MCF 10A (cell line): ENCODE measurements at regions of chr3 and their contacts with region 1.

Region 1: GRCh38 chr3:50227390-50228183 is 8.4 kb upstream of the GNAI2 start:
- DNase-seq: peak; percentile 95
- H3K4me3 Mint-ChIP-seq: peak overlapping the region; percentile 74
- H3K27ac Mint-ChIP-seq: peak overlapping the region; percentile 17
- H3K4me1 Mint-ChIP-seq: peaks cover 12% of the 10 kb centered on the region
- H3K27me3 Mint-ChIP-seq: peaks cover 16% of the 10 kb centered on the region
- CTCF ChIP-seq: peak; percentile 91

Region 2: DNA sequence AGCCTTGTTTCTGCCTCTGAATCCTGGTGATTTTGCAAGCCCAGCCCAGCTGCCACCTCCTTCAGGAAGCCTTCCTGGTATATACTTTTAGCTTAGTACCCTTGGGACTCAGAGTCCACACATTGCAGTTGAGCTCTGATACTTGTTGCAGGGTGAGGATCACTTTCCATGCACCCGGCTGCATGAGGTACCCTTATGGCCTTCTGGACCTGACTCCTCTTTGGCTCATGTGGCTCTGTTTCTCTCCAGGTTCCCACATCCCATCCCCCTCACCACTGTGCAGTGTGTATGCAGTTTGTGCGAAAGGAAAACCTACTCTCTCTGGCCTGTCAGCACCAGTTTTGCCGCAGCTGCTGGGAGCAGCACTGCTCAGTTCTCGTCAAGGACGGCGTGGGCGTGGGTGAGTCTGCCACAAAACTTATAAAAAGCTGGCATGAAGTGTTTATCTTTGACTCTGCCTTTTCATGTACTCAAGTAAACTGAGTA is 1260.7 kb before region 1 on chr3:
- CTCF ChIA-PET with region 1: no interaction called
- POLR2A ChIA-PET with region 1: no interaction called
- intact Hi-C with region 1: no loop called
- DNase-seq: no peak
- H3K4me3 Mint-ChIP-seq: no peak overlapping the region
- H3K27ac Mint-ChIP-seq: no peak overlapping the region
- H3K4me1 Mint-ChIP-seq: peaks cover 5% of the 10 kb centered on the region
- H3K27me3 Mint-ChIP-seq: no peaks in the 10 kb centered on the region
- CTCF ChIP-seq: no peak

Region 3: GRCh38 chr3:49966230-49966942 is 261.2 kb before region 1 on chr3:
- CTCF ChIA-PET with region 1: no interaction called
- POLR2A ChIA-PET with region 1: no interaction called
- intact Hi-C with region 1: no loop called
- DNase-seq: peak; percentile 33
- H3K4me3 Mint-ChIP-seq: no peak overlapping the region
- H3K27ac Mint-ChIP-seq: no peak overlapping the region
- H3K4me1 Mint-ChIP-seq: peaks cover 4% of the 10 kb centered on the region
- H3K27me3 Mint-ChIP-seq: no peaks in the 10 kb centered on the region
- CTCF ChIP-seq: no peak

Region 4: GRCh38 chr3:50121416-50122032 is 106.1 kb before region 1 on chr3:
- CTCF ChIA-PET with region 1: interaction called, 72 read pairs
- POLR2A ChIA-PET with region 1: interaction called, 37 read pairs
- intact Hi-C with region 1: loop called (anchors 1 kb)
- DNase-seq: peak; percentile 84
- H3K4me3 Mint-ChIP-seq: no peak overlapping the region
- H3K27ac Mint-ChIP-seq: no peak overlapping the region
- H3K4me1 Mint-ChIP-seq: peaks cover 13% of the 10 kb centered on the region
- H3K27me3 Mint-ChIP-seq: no peaks in the 10 kb centered on the region
- CTCF ChIP-seq: peak; percentile 80

Region 5: DNA sequence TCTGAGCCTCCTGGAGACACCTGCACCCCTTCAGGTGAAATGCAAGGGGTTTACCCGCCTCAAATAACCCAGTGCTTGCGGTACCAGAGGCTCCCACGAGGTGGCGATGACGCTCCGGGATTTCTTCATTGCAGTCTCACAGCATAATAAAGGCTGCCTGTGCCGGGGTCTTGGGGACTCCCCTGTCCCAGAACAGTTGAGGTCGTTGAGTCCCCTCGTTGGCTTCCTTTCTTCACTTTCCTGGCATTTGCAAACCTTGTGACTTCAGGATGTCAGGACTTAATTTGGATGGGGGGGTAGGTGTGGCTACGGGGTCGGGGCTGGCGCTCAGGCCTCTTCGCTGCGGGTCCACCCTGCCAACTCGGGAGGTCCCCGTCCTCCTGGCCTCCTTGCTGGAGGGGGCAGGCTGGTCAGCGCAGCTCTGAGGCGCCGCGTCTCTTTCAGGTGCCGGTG is 34.9 kb before region 1 on chr3:
- CTCF ChIA-PET with region 1: interaction called, 209 read pairs
- POLR2A ChIA-PET with region 1: interaction called, 6 read pairs
- intact Hi-C with region 1: loop called (anchors 1 kb)
- DNase-seq: peak; percentile 68
- H3K4me3 Mint-ChIP-seq: no peak overlapping the region
- H3K27ac Mint-ChIP-seq: no peak overlapping the region
- H3K4me1 Mint-ChIP-seq: no peaks in the 10 kb centered on the region
- H3K27me3 Mint-ChIP-seq: no peaks in the 10 kb centered on the region
- CTCF ChIP-seq: peak; percentile 85

Region 6: DNA sequence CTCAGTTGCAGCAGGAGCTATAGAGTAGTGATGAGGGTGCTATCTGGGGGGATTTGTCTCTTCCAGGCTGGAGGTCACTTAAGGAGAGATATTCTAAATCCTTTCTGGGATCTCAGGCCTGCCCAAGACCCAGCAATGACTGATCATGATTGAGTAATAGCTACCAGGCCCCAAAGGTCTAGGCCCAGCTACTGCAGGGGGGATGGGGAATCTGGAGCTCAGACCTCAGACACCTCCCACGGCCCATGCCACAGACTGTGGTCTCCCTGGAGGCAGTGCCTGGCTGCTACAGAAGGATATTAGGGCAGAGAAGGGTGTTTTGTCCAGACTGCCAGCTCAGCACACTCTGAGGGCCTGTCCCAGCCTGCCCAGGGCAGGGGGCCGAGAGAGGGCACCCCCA is 15.7 kb before region 1 on chr3:
- CTCF ChIA-PET with region 1: interaction called, 21 read pairs
- POLR2A ChIA-PET with region 1: interaction called, 3 read pairs
- intact Hi-C with region 1: no loop called
- DNase-seq: no peak
- H3K4me3 Mint-ChIP-seq: no peak overlapping the region
- H3K27ac Mint-ChIP-seq: no peak overlapping the region
- H3K4me1 Mint-ChIP-seq: no peaks in the 10 kb centered on the region
- H3K27me3 Mint-ChIP-seq: no peaks in the 10 kb centered on the region
- CTCF ChIP-seq: no peak

Region 7: DNA sequence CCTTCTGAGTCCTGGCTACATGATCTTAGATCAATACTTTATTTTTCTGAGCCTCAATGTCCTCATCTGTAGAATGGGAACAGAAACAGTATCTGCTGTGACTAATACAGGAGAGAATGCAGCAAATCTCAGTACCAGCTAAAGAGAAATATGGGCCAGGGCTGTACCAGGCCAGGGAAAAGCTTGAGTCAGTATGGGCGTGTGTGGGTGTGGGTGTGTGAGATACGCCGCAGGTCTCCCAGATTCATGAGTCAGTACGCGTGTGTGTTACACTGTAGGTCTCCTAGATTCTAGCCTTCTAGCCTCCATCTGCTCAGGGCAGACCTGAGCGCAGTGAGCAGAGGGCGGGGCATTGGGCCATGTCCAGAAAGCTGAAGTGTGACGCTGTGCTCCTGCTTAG is 23.6 kb after region 1 on chr3:
- CTCF ChIA-PET with region 1: interaction called, 107 read pairs
- POLR2A ChIA-PET with region 1: interaction called, 26 read pairs
- intact Hi-C with region 1: loop called (anchors 1 kb)
- DNase-seq: peak; percentile 96
- H3K4me3 Mint-ChIP-seq: peak overlapping the region; percentile 23
- H3K27ac Mint-ChIP-seq: peak overlapping the region; percentile 92
- H3K4me1 Mint-ChIP-seq: peaks cover 42% of the 10 kb centered on the region
- H3K27me3 Mint-ChIP-seq: no peaks in the 10 kb centered on the region
- CTCF ChIP-seq: no peak

Region 8: DNA sequence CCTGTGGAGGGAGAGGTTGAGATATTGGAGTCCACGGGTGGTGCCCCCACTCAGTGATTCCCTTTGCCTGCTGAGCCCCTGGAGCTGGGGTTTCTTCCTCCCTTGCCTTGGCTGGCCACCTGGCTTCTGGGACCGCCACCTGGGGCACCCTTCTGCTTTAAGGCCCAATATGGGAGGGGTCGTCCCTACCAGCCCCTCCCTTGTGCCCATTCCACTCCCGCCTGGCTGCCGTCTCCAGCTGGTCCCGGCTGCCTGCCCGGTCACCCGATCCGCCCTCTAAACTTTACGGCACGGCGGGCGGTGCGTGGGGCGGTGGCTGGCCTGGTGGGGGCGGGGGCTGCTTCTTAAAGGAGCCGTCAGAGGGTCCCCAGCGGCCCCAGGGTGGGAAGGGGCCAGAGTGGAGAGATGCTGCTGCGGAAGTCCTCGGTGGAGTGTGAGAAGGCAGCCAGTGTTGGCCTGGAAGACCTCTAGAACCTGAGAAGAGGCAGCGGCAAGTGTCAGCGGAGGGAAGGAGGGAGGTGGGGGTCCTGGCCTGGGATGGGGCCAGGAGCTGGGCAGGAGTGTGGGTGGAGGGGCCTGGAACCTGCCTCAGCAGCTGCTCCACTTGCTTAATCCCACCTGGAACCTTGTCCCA is 39.8 kb after region 1 on chr3:
- CTCF ChIA-PET with region 1: interaction called, 12 read pairs
- POLR2A ChIA-PET with region 1: interaction called, 5 read pairs
- intact Hi-C with region 1: no loop called
- DNase-seq: no peak
- H3K4me3 Mint-ChIP-seq: no peak overlapping the region
- H3K27ac Mint-ChIP-seq: no peak overlapping the region
- H3K4me1 Mint-ChIP-seq: peaks cover 34% of the 10 kb centered on the region
- H3K27me3 Mint-ChIP-seq: no peaks in the 10 kb centered on the region
- CTCF ChIP-seq: no peak

Region 9: DNA sequence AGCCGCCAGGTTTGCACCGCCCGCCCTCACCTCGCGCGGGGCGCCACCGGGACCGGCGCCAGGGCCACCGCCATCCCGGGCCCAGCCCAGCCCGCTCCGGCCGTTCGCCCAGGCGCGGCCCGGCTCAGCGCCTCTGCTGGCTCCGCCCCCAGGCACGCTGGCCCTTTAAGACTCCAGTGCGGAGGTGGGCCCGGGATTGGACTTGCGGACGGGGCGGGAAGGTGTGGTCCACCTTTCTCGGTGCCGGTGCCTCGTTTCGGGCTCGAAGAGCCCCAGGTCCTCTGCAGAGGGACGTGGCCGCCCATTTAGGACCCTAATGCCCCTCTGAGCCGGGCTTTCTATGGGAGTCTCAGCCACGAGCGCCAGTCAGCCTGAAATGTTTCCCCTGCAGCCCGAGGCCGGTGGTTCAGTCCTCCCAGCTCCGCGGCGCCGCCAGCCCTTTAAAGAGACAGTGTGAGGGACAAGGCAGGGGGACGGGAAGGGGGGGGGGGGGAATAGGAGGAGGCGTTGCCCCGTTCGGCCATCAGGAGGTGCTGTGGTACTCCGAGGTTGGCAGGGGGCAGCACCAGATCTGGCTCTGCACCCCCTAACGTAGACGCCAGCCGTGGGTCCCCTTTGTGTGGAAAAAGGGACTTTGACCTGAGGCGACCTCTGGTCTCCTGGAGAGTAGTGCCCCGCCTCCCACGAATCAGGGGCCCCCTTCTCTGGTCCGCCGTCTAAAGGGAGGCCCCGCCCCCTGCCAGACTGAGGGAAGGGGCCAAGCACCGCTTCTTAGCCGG is 93.9 kb after region 1 on chr3:
- CTCF ChIA-PET with region 1: interaction called, 12 read pairs
- POLR2A ChIA-PET with region 1: no interaction called
- intact Hi-C with region 1: no loop called
- DNase-seq: peak; percentile 89
- H3K4me3 Mint-ChIP-seq: peak overlapping the region; percentile 80
- H3K27ac Mint-ChIP-seq: peak overlapping the region; percentile 98
- H3K4me1 Mint-ChIP-seq: peaks cover 17% of the 10 kb centered on the region
- H3K27me3 Mint-ChIP-seq: no peaks in the 10 kb centered on the region
- CTCF ChIP-seq: peak; percentile 38